CD8-positive, alpha-beta T cell (primary cell): ENCODE measurements at regions of chr7 and their contacts with region 1.

Region 1: DNA sequence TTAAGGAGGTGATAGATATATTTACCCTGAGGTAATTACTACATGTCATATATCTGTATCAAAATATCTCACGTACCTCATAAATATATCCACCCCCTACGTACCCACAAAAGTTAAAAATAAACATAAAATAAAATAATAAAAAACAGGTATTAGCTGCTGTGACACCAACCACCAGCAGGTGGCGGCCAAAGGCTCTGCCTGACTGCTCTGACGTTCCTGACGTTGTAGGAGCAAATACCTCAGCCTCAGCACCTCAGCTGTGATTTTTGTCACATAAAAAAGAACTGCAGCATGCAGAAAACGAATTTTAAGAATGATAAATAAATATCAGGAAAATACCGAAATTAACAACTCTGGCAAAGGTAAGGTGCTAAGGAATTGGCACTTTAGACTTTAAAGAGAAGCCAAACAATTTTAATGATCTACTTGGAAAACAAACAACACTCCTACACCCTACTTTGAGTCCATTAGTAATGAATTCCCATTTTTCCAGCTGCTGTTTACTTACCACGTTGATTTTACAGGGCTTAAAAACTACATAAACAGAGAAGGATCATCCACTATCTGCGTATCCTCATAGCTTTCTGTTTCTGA is 125.4 kb upstream of the TARP start:
- DNase-seq: peak in 8 of 9 experiments; percentile 35 to 71 (median 56)
- ATAC-seq: peak; percentile 82
- H3K4me3 ChIP-seq: no peak overlapping the region
- H3K4me3 Mint-ChIP-seq: no peak overlapping the region
- H3K27ac ChIP-seq: no peak overlapping the region
- H3K27ac Mint-ChIP-seq: no peak overlapping the region
- H3K4me1 ChIP-seq: no peaks in the 10 kb centered on the region
- H3K4me1 Mint-ChIP-seq: peaks cover 6% of the 10 kb centered on the region
- H3K27me3 ChIP-seq: no peaks in the 10 kb centered on the region
- H3K27me3 Mint-ChIP-seq: no peaks in the 10 kb centered on the region
- CTCF ChIP-seq: peak; percentile 94

Region 2: DNA sequence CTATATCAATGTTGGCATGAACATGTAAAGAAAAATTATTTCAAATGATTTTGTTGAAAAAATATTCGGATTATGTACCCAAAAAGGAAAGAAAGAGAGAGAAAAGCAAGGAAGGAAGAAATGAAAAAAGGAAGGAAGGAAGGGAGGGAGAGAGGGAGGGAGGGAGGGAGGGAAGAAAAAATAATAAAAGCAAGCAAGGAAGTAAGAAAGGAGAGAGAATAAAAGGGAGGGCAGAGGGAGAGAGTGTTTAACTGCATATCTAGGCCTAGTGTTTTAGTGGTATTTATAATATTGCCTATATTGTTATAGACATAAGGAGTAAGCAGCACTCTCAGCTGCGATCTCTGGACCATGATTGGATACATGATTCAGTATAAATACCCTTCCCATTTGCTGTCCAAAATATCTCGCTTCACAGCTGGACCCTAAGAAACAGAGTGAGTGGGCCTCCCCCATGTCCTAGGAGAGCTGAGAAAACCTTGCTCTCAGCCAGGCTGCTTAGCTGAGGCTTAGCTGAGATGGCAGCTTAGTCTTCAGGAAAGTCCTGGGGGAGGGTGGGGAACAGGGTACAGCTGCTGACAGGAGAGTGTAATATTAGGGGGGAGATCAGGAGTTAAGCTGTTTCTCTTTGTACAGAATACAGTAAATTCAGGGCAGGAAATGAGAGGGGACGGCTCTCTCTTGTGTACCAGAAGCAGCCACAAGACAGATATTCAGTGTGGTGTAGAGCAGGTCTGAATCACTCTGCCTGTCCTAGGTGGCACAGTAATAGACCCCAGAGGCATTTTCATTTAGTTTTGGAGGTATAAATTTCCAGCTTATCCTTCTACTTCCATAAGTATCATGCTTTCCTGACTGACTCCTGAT is 58.6 kb before region 1 on chr7:
- CTCF ChIA-PET with region 1: no interaction called
- POLR2A ChIA-PET with region 1: no interaction called
- intact Hi-C with region 1: no loop called
- DNase-seq: peak in 4 of 9 experiments; percentile 28 to 60 (median 45)
- ATAC-seq: peak; percentile 70
- H3K4me3 ChIP-seq: peak overlapping the region; percentile 3 to 18
- H3K4me3 Mint-ChIP-seq: peak overlapping the region; percentile 72
- H3K27ac ChIP-seq: peak overlapping the region in 1 of 2 experiments; percentile 63
- H3K27ac Mint-ChIP-seq: peak overlapping the region; percentile 92
- H3K4me1 ChIP-seq: peaks cover 39% of the 10 kb centered on the region
- H3K4me1 Mint-ChIP-seq: peaks cover 61% of the 10 kb centered on the region
- H3K27me3 ChIP-seq: no peaks in the 10 kb centered on the region
- H3K27me3 Mint-ChIP-seq: no peaks in the 10 kb centered on the region
- CTCF ChIP-seq: no peak

Region 3: GRCh38 chr7:38410056-38410455 is 11.2 kb after region 1 on chr7:
- CTCF ChIA-PET with region 1: interaction called, 16 read pairs
- POLR2A ChIA-PET with region 1: no interaction called
- intact Hi-C with region 1: no loop called
- DNase-seq: no peak
- ATAC-seq: no peak
- H3K4me3 ChIP-seq: no peak overlapping the region
- H3K4me3 Mint-ChIP-seq: no peak overlapping the region
- H3K27ac ChIP-seq: no peak overlapping the region
- H3K27ac Mint-ChIP-seq: no peak overlapping the region
- H3K4me1 ChIP-seq: no peaks in the 10 kb centered on the region
- H3K4me1 Mint-ChIP-seq: peaks cover 22% of the 10 kb centered on the region
- H3K27me3 ChIP-seq: peaks cover 0 to 2% of the 10 kb centered on the region in 2 experiments
- H3K27me3 Mint-ChIP-seq: no peaks in the 10 kb centered on the region
- CTCF ChIP-seq: no peak

Region 4: GRCh38 chr7:38632403-38632802 is 233.6 kb after region 1 on chr7:
- CTCF ChIA-PET with region 1: interaction called, 7 read pairs
- POLR2A ChIA-PET with region 1: no interaction called
- intact Hi-C with region 1: loop called in 1 of 2 experiments (anchors 1 kb)
- DNase-seq: peak in 2 of 9 experiments; percentile 12 to 25
- ATAC-seq: no peak
- H3K4me3 ChIP-seq: no peak overlapping the region
- H3K4me3 Mint-ChIP-seq: no peak overlapping the region
- H3K27ac ChIP-seq: no peak overlapping the region
- H3K27ac Mint-ChIP-seq: no peak overlapping the region
- H3K4me1 ChIP-seq: no peaks in the 10 kb centered on the region
- H3K4me1 Mint-ChIP-seq: peaks cover 10% of the 10 kb centered on the region
- H3K27me3 ChIP-seq: peaks cover 0 to 7% of the 10 kb centered on the region in 2 experiments
- H3K27me3 Mint-ChIP-seq: peaks cover 59% of the 10 kb centered on the region
- CTCF ChIP-seq: no peak

Region 5: DNA sequence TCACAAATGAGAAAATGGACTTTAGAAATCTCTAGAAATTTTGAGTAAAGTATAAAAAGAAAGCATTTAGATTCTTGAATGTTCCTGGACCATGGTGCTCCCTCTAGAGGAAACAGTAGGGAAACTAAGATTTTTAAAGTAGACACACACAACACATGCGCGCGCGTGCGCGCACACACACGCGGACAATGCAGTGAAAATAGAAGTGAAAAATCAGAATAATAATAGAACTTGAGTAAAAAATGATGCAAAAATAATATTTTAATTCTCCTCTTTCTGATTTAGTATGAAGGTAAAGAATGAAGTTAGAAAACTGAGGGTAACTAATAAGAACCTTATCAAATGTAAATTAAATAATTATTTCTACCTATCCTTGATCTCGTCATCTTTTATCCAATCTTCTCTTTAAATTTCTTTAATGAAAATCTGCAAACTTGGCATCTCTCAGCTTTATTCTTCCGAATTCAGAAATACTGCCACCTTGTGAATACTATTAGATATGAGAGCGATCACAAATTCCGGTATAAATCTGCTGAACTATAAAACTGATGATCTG is 349.3 kb after region 1 on chr7:
- CTCF ChIA-PET with region 1: interaction called, 4 read pairs
- POLR2A ChIA-PET with region 1: no interaction called
- intact Hi-C with region 1: loop called (anchors 2 to 5 kb)
- DNase-seq: peak in 1 of 9 experiments; percentile 8
- ATAC-seq: no peak
- H3K4me3 ChIP-seq: no peak overlapping the region
- H3K4me3 Mint-ChIP-seq: no peak overlapping the region
- H3K27ac ChIP-seq: no peak overlapping the region
- H3K27ac Mint-ChIP-seq: no peak overlapping the region
- H3K4me1 ChIP-seq: no peaks in the 10 kb centered on the region
- H3K4me1 Mint-ChIP-seq: no peaks in the 10 kb centered on the region
- H3K27me3 ChIP-seq: no peaks in the 10 kb centered on the region
- H3K27me3 Mint-ChIP-seq: no peaks in the 10 kb centered on the region
- CTCF ChIP-seq: peak; percentile 22

Region 6: GRCh38 chr7:38773430-38773829 is 374.6 kb after region 1 on chr7:
- CTCF ChIA-PET with region 1: no interaction called
- POLR2A ChIA-PET with region 1: no interaction called
- intact Hi-C with region 1: no loop called
- DNase-seq: no peak
- ATAC-seq: no peak
- H3K4me3 ChIP-seq: no peak overlapping the region
- H3K4me3 Mint-ChIP-seq: no peak overlapping the region
- H3K27ac ChIP-seq: no peak overlapping the region
- H3K27ac Mint-ChIP-seq: no peak overlapping the region
- H3K4me1 ChIP-seq: no peaks in the 10 kb centered on the region
- H3K4me1 Mint-ChIP-seq: no peaks in the 10 kb centered on the region
- H3K27me3 ChIP-seq: no peaks in the 10 kb centered on the region
- H3K27me3 Mint-ChIP-seq: no peaks in the 10 kb centered on the region
- CTCF ChIP-seq: no peak

Region 7: GRCh38 chr7:39517240-39517639 is 1118.4 kb after region 1 on chr7:
- CTCF ChIA-PET with region 1: no interaction called
- POLR2A ChIA-PET with region 1: no interaction called
- intact Hi-C with region 1: loop called in 1 of 2 experiments (anchors 2 kb)
- DNase-seq: no peak
- ATAC-seq: no peak
- H3K4me3 ChIP-seq: no peak overlapping the region
- H3K4me3 Mint-ChIP-seq: no peak overlapping the region
- H3K27ac ChIP-seq: no peak overlapping the region
- H3K27ac Mint-ChIP-seq: no peak overlapping the region
- H3K4me1 ChIP-seq: no peaks in the 10 kb centered on the region
- H3K4me1 Mint-ChIP-seq: peaks cover 3% of the 10 kb centered on the region
- H3K27me3 ChIP-seq: peaks cover 0 to 5% of the 10 kb centered on the region in 2 experiments
- H3K27me3 Mint-ChIP-seq: peaks cover 8% of the 10 kb centered on the region
- CTCF ChIP-seq: no peak